Gastrocnemius medialis (tissue), 4 donors: ENCODE measurements at regions of chr11 and their contacts with region 1.

Region 1: GRCh38 chr11:45110562-45110961 is 35.9 kb upstream of the PRDM11 start:
- DNase-seq: no peak
- ATAC-seq: peak; percentile 71 to 73
- H3K4me3 ChIP-seq: no peak overlapping the region
- H3K27ac ChIP-seq: no peak overlapping the region
- H3K4me1 ChIP-seq: no peaks in the 10 kb centered on the region
- H3K27me3 ChIP-seq: no peaks in the 10 kb centered on the region
- CTCF ChIP-seq: peak; percentile 61 to 89 (median 84)
- POLR2A ChIP-seq: no peak

Region 2: DNA sequence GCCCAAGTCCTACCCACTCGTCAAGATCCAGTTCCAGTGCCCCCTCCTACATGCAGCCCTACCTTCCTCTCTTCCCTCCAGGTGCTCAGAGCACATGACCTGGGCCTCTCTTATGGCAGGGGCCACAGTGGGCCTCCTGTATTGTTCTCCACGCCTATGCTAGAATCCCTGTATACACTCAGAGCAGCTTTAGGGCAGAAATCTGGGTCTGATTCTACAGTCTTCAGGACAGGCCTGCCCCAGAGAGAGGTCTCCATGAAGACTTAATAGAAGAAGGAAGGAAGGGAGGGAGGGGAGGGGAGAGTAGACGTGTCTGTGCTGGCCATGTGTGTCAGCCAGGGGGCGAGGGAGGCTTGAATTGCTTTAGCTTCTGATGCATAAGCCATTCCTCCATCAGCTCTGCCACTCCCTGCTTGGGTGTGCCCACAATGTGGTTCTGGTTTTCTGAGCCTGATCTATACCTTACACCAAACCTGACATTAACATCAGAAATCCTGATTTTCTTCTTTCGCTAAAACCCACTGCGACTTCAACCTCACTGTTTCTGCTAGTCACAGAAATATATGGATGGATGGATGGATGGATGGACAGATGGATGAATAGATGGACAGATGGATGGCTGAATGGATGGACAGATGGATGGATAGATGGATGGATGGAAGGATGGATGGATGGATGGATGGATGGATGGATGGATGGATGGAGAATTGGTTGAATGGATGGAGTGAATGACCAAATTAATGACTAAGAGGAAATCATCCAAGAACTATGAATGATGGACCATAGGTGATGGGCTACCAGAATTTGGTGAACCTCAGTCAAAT is 20.7 kb before region 1 on chr11:
- in situ Hi-C with region 1: no loop called
- intact Hi-C with region 1: no loop called
- DNase-seq: no peak
- ATAC-seq: no peak
- H3K4me3 ChIP-seq: no peak overlapping the region
- H3K27ac ChIP-seq: peak overlapping the region; percentile 63 to 80 (median 72)
- H3K4me1 ChIP-seq: peaks cover 20 to 23% of the 10 kb centered on the region in 2 donors
- H3K27me3 ChIP-seq: no peaks in the 10 kb centered on the region
- CTCF ChIP-seq: no peak
- POLR2A ChIP-seq: no peak

Region 3: DNA sequence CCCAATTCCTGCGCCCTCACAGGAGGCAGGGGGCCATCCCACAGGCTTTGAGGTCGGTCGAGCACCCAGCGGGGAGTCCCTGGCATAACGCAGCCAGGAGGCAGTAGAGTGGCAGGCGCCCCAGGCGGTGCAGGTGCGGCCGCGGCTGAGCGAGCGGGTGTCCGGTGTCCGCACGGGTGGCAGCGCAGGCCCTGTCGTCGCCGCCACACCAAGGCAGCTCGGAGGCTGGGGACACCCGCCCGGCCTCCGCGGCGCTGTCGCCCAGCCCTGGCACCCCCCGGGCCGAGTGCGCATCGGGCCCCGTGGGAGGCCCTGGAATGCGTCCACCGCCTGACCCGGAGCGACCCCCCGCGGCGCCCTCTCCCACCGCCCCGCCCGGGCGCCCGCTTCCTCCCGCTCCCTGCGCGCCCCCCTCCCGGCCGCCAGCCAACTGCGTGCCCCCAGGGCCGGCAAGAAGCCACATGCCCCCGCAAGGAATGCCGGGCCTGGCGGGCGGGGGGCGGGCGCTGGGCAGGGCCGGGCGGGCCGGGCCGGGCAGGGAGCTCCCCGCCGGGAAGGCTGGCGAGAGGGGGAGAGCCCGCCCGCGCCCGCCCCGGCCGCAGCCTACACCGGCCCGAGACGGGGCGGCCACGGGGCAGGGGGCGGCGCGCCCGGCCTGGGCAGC is 69.7 kb after region 1 on chr11:
- in situ Hi-C with region 1: no loop called
- intact Hi-C with region 1: loop called (anchors 5 kb)
- DNase-seq: peak; percentile 58 to 72
- ATAC-seq: peak; percentile 77 to 78
- H3K4me3 ChIP-seq: peak overlapping the region; percentile 48 to 64 (median 53)
- H3K27ac ChIP-seq: peak overlapping the region; percentile 73 to 84 (median 78)
- H3K4me1 ChIP-seq: peaks cover 10 to 16% of the 10 kb centered on the region in 2 donors
- H3K27me3 ChIP-seq: no peaks in the 10 kb centered on the region
- CTCF ChIP-seq: peak; percentile 46 to 71 (median 57)
- POLR2A ChIP-seq: peak in 1 of 2 donors; percentile 29

Region 4: GRCh38 chr11:45233121-45233803 is 122.7 kb after region 1 on chr11:
- in situ Hi-C with region 1: loop called in 1 of 4 experiments (anchors 10 kb)
- intact Hi-C with region 1: loop called (anchors 1 kb)
- DNase-seq: peak; percentile 15 to 56
- ATAC-seq: peak; percentile 79 to 87
- H3K4me3 ChIP-seq: no peak overlapping the region
- H3K27ac ChIP-seq: no peak overlapping the region
- H3K4me1 ChIP-seq: no peaks in the 10 kb centered on the region
- H3K27me3 ChIP-seq: peaks cover 0 to 6% (median 0%) of the 10 kb centered on the region in 3 donors
- CTCF ChIP-seq: peak; percentile 55 to 89 (median 77)
- POLR2A ChIP-seq: no peak

Region 5: DNA sequence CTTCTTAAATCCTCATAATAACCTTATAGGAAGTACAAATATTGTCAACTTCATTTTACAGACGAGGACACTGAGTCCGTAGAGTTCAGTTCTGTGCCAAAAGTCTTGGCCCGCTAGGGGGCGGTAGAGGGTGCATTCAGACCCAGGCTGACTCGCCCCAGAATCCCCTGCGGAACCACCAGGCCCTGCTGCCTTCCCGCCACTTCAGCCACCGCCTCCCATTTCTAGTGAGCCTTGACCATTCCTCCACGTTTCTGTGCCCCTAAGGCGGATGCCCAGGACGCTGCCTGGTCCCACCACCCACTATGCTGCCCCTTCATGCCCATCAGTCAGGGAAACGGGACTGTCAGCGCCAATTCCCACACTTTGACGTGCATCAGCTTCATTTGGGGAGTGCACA is 156.5 kb after region 1 on chr11:
- in situ Hi-C with region 1: no loop called
- intact Hi-C with region 1: no loop called
- DNase-seq: no peak
- ATAC-seq: no peak
- H3K4me3 ChIP-seq: no peak overlapping the region
- H3K27ac ChIP-seq: no peak overlapping the region
- H3K4me1 ChIP-seq: no peaks in the 10 kb centered on the region
- H3K27me3 ChIP-seq: peaks cover 0 to 9% (median 1%) of the 10 kb centered on the region in 3 donors
- CTCF ChIP-seq: no peak
- POLR2A ChIP-seq: no peak

Region 6: GRCh38 chr11:45298718-45299117 is 188.2 kb after region 1 on chr11:
- in situ Hi-C with region 1: loop called (anchors 5 to 10 kb)
- intact Hi-C with region 1: loop called (anchors 1 kb)
- DNase-seq: no peak
- ATAC-seq: no peak
- H3K4me3 ChIP-seq: no peak overlapping the region
- H3K27ac ChIP-seq: no peak overlapping the region
- H3K4me1 ChIP-seq: no peaks in the 10 kb centered on the region
- H3K27me3 ChIP-seq: no peaks in the 10 kb centered on the region
- CTCF ChIP-seq: no peak
- POLR2A ChIP-seq: no peak

Region 7: DNA sequence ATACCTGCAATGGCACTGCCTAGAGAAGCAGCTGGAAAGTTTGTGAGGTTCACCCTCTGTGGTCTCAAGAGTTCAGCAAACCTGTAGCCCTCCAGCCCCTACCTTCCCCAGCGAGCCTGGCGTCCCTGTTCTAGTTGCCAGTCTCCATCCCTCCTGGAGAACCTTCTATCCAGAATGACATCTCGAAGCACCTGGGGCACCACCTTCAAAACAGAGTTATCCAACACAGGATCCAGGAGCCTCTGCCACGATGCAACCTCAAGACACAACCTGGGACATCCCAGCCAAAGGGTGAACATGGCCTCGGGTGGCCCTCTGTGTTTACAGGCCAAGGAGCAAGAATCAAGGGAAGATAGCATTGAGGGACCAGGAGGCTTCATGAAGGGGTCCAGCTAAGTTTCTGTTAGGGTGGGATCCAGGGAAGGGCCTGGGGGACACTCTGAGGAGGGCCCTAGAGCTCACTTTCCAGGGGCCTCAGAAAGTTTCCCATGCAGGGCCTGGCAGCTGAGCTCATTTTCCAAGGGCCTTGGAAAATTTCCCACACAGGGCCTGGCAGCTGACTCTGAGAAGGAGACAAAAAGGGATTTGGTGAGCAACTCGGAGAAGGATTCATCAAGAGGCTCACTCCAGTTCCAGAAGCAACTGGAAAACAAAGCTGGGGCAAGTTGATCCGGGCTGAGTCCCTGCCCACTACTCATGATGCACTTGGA is 212.5 kb after region 1 on chr11:
- in situ Hi-C with region 1: loop called in 2 of 4 experiments (anchors 10 kb)
- intact Hi-C with region 1: no loop called
- DNase-seq: no peak
- ATAC-seq: no peak
- H3K4me3 ChIP-seq: no peak overlapping the region
- H3K27ac ChIP-seq: no peak overlapping the region
- H3K4me1 ChIP-seq: peaks cover 0 to 3% of the 10 kb centered on the region in 2 donors
- H3K27me3 ChIP-seq: peaks cover 0 to 2% (median 0%) of the 10 kb centered on the region in 3 donors
- CTCF ChIP-seq: no peak
- POLR2A ChIP-seq: no peak

Region 8: DNA sequence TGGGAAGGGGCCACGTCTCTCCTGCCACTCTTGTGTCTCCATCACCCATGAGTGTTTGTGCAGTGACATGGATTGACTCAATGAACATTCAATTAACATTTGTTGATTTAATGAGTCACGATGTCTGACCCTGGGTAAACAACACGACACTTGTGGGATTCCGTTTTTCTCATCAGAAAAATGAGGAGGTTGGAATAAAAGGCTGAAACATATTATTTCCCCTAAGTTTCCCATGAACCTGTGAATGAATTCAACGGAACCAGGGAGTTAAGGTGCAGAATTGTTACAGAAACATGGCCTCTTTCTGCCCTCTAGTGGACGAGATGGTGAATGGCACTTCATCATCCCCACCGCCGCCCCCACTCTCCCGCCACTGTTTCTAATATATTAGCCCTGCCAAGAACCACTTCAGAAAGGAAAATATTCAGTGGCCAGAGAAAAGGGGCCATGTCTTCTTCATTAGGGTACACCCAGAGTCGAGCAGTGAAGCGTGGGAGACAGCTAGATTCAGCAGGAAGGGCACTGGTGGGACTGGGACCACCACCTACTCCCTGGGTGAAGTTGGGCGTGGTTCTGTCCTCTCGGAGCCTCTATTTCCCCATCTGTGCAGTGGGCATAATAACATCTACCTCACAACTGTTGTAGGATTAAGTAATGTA is 221.8 kb after region 1 on chr11:
- in situ Hi-C with region 1: loop called in 3 of 4 experiments (anchors 10 kb)
- intact Hi-C with region 1: loop called (anchors 1 kb)
- DNase-seq: no peak
- ATAC-seq: peak; percentile 61 to 82
- H3K4me3 ChIP-seq: peak overlapping the region in 2 of 4 donors; percentile 2 to 9
- H3K27ac ChIP-seq: peak overlapping the region in 3 of 4 donors; percentile 33 to 59 (median 47)
- H3K4me1 ChIP-seq: peaks cover 0 to 4% of the 10 kb centered on the region in 2 donors
- H3K27me3 ChIP-seq: peaks cover 0 to 1% (median 0%) of the 10 kb centered on the region in 3 donors
- CTCF ChIP-seq: peak in 4 of 5 experiments; percentile 29 to 87 (median 65)
- POLR2A ChIP-seq: no peak

Region 9: DNA sequence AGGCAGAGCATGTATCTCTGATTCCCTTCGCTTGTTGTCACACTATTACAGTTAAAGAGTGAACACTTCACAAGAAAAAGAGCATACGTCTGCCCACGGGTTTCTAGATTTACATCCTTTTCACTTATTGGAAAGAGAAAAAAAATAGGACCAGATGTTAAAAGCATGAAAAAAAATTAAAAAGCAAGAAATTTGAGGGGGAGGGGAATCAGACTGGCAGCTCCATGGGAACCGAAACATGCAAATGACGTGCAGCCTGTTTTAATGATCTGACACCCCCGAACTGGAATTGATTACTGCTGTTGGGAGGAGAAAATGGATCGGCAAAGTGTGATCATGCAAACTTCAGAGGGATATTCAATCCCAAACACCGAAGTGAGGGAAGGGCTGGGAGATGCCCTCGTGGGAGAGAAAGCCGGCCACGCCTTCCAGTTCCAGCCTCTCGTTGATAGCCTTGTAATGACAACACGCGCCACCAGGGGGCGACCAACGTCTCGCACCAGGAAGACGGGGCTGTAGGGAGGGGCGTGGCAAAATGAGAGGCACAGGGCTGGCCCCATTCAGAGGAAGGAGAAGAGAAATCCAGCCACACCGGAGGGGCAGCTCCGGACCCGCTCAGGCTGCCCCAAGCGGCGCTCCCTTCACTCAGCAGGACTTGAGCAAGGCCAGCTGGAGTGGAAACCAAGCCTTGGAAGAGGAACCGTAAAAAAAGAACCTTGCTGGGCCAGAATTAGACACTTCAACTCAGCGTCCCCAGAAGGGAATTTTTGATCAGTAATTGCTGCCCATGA is 229.4 kb after region 1 on chr11:
- in situ Hi-C with region 1: loop called in 1 of 4 experiments (anchors 10 kb)
- intact Hi-C with region 1: no loop called
- DNase-seq: peak; percentile 70 to 86
- ATAC-seq: peak; percentile 96 to 99
- H3K4me3 ChIP-seq: peak overlapping the region; percentile 1 to 34 (median 19)
- H3K27ac ChIP-seq: no peak overlapping the region
- H3K4me1 ChIP-seq: peaks cover 10 to 14% of the 10 kb centered on the region in 2 donors
- H3K27me3 ChIP-seq: peaks cover 0 to 6% (median 0%) of the 10 kb centered on the region in 3 donors
- CTCF ChIP-seq: peak; percentile 86 to 90 (median 87)
- POLR2A ChIP-seq: no peak